CD4-positive, alpha-beta T cell (primary cell): ENCODE measurements at regions of chr2 and their contacts with region 1.

Region 1: DNA sequence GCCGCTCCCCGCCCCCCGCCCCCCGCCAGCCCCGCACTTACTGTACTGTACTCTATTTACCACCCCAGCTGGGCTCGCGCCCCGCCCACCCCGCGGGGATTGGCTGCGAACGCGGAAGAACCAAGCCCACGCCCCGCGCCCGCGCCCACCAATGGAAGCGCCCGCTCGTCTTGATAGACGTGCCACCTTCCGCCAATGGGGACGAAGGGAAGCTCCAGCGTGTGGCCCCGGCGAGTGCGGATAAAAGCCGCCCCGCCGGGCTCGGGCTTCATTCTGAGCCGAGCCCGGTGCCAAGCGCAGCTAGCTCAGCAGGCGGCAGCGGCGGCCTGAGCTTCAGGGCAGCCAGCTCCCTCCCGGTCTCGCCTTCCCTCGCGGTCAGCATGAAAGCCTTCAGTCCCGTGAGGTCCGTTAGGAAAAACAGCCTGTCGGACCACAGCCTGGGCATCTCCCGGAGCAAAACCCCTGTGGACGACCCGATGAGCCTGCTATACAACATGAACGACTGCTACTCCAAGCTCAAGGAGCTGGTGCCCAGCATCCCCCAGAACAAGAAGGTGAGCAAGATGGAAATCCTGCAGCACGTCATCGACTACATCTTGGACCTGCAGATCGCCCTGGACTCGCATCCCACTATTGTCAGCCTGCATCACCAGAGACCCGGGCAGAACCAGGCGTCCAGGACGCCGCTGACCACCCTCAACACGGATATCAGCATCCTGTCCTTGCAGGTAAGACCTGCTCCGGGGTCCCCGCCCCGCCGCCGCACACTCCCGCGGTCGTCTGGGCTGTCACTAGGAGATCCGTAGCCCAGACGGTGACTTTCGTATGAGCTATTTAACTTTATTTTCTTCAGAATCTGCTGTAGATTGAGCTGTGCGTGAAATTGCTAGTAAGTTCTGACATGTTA is at the start of gene ID2:
- DNase-seq: peak; percentile 97 to 99 (median 98)
- ATAC-seq: peak; percentile 73
- H3K4me3 ChIP-seq: peak within 1 kb of the TSS; percentile 77
- H3K4me3 Mint-ChIP-seq: peak within 1 kb of the TSS; percentile 99
- H3K27ac ChIP-seq: peak within 1 kb of the TSS; percentile 37 to 52
- H3K27ac Mint-ChIP-seq: peak within 1 kb of the TSS; percentile 89
- H3K4me1 ChIP-seq: peaks cover 46% of the 10 kb centered on the region
- H3K4me1 Mint-ChIP-seq: peaks cover 54% of the 10 kb centered on the region
- H3K27me3 ChIP-seq: peaks cover 12 to 23% of the 10 kb centered on the region in 2 experiments
- H3K27me3 Mint-ChIP-seq: peaks cover 20% of the 10 kb centered on the region
- CTCF ChIP-seq: no peak
- total RNA-seq, gene ID2: 238 to 242 TPM

Region 2: DNA sequence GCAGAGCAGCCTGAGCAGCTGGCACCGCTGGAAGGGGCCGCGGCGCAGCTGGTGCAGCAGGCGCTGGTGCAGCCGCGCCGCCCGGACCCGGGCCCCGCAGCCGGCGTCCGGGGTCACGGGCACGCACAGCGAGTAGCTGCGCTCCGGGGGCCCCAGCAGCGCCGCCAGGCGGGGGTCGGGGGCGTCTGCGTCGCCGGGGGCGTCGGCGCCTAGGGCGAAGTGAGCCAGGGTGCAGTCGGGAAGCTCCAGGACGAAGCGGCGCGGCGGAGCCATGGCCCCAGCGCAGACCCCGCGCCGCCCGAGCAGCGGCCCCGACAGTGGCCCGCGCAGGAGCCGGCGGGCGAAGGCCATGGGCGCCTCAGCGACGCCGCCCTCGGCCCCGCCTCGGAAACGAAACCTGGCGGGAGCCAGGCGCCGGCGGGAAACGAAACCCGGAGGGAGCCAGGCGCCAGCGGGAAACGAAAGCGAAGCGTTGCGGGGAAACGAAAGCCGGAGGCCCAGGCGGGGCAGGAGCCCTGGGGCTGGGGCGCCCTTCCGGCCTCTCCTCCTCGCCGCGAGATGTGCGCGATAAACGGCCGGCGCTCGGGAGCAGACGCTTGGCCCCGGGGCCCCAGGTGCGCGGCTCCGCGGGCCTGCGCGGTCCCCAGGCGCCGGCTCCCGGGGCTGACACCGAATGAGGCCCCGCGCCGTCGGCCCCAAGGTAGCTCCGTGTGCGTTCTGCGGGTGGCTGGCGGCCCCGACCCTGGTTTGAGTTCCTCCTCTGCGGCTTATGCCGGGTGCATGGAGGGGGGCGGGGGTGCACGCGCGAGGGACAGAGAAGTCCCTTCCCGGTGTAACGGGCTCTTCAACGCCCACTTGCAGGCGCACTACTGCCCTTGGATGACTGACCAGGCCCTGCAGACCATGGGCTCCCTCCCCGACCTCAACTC is 1816.4 kb before region 1 on chr2 and contains the start of gene CMPK2:
- CTCF ChIA-PET with region 1: no interaction called
- POLR2A ChIA-PET with region 1: interaction called, 10 read pairs
- intact Hi-C with region 1: no loop called
- DNase-seq: peak; percentile 60 to 97 (median 74)
- ATAC-seq: peak; percentile 74
- H3K4me3 ChIP-seq: peak within 1 kb of the TSS; percentile 93
- H3K4me3 Mint-ChIP-seq: peak within 1 kb of the TSS; percentile 96
- H3K27ac ChIP-seq: peak within 1 kb of the TSS in 1 of 2 donors; percentile 46
- H3K27ac Mint-ChIP-seq: peak within 1 kb of the TSS; percentile 86
- H3K4me1 ChIP-seq: peaks cover 19% of the 10 kb centered on the region
- H3K4me1 Mint-ChIP-seq: peaks cover 20% of the 10 kb centered on the region
- H3K27me3 ChIP-seq: no peaks in the 10 kb centered on the region
- H3K27me3 Mint-ChIP-seq: no peaks in the 10 kb centered on the region
- CTCF ChIP-seq: no peak
- total RNA-seq, gene CMPK2: 6.5 to 7.6 TPM

Region 3: GRCh38 chr2:7057865-7058400 is 1624.1 kb before region 1 on chr2:
- CTCF ChIA-PET with region 1: no interaction called
- POLR2A ChIA-PET with region 1: interaction called, 13 read pairs
- intact Hi-C with region 1: no loop called
- DNase-seq: peak in 4 of 14 experiments; percentile 36 to 62 (median 40)
- ATAC-seq: peak; percentile 37
- H3K4me3 ChIP-seq: peak overlapping the region; percentile 12
- H3K4me3 Mint-ChIP-seq: peak overlapping the region; percentile 72
- H3K27ac ChIP-seq: peak overlapping the region in 1 of 2 donors; percentile 57
- H3K27ac Mint-ChIP-seq: no peak overlapping the region
- H3K4me1 ChIP-seq: peaks cover 27% of the 10 kb centered on the region
- H3K4me1 Mint-ChIP-seq: no peaks in the 10 kb centered on the region
- H3K27me3 ChIP-seq: no peaks in the 10 kb centered on the region
- H3K27me3 Mint-ChIP-seq: no peaks in the 10 kb centered on the region
- CTCF ChIP-seq: no peak

Region 4: DNA sequence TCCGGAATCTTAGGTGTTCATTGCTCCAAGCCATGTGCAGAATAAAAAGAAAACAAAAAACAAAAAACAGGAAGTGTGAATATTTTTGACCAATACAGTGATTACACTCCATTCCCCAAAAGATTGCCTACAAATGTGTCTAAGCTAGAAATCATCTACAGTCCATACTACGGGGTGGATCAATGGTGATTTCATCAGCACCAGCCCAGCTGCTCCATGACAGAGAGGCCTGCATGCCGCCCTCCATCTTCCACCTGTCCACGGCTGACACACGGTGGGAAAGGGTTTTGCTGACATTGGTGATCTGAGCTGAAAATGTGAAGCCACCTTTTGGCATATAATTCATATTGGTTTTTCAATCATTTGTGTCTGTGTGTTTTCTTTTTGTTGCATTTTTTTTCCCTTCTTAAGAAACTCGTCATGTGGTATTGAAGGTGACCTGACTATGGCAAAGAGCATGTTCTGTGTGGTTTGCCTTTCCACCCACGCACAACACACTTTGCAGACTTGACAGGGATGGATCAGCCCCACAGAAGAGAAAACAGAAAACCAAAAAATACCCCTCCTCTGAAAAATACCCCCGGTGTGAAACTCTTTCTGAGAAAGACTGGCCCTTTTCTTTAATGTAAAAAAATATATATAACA is 1231.7 kb before region 1 on chr2:
- CTCF ChIA-PET with region 1: no interaction called
- POLR2A ChIA-PET with region 1: interaction called, 28 read pairs
- intact Hi-C with region 1: no loop called
- DNase-seq: peak in 7 of 14 experiments; percentile 23 to 76 (median 54)
- ATAC-seq: peak; percentile 81
- H3K4me3 ChIP-seq: no peak overlapping the region
- H3K4me3 Mint-ChIP-seq: peak overlapping the region; percentile 81
- H3K27ac ChIP-seq: peak overlapping the region; percentile 44 to 68
- H3K27ac Mint-ChIP-seq: peak overlapping the region; percentile 89
- H3K4me1 ChIP-seq: peaks cover 54% of the 10 kb centered on the region
- H3K4me1 Mint-ChIP-seq: peaks cover 73% of the 10 kb centered on the region
- H3K27me3 ChIP-seq: no peaks in the 10 kb centered on the region
- H3K27me3 Mint-ChIP-seq: no peaks in the 10 kb centered on the region
- CTCF ChIP-seq: no peak

Region 5: DNA sequence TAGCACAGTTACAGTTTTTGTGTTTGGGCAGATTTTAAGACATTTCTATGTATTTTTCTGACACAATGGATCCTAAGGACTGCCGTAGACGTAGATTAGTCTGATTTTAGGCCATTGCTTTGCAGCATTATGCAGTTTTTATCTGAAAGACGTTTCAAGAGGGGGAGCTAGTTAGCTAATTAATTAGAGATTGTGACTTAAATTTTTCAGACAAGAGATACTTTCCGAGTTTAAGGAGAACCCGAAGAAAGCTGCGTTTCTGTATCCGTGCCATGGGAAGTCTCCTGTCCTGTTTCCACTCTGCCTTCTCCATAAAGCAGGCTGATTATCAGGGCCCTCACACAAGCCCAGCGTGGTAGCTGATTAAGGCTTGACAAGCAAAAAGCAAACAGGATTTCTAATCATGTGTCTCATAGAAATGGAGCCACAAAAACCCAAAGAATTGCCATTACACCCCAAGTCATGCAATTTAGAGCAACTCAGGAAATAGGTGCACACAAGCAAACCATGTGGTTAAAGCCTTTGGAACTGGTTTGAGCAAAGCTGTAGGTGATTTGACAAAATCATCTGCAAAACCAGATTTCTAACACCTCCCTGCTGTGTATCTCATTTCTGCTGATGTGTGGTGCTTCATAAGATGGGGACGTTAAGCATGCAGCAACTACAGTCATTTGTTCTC is 956.7 kb before region 1 on chr2:
- CTCF ChIA-PET with region 1: no interaction called
- POLR2A ChIA-PET with region 1: interaction called, 34 read pairs
- intact Hi-C with region 1: loop called in 1 of 2 experiments (anchors 10 kb)
- DNase-seq: peak in 4 of 14 experiments; percentile 17 to 85 (median 72)
- ATAC-seq: peak; percentile 73
- H3K4me3 ChIP-seq: peak overlapping the region; percentile 52
- H3K4me3 Mint-ChIP-seq: peak overlapping the region; percentile 8
- H3K27ac ChIP-seq: peak overlapping the region in 1 of 2 donors; percentile 39
- H3K27ac Mint-ChIP-seq: peak overlapping the region; percentile 52
- H3K4me1 ChIP-seq: peaks cover 18% of the 10 kb centered on the region
- H3K4me1 Mint-ChIP-seq: peaks cover 33% of the 10 kb centered on the region
- H3K27me3 ChIP-seq: no peaks in the 10 kb centered on the region
- H3K27me3 Mint-ChIP-seq: no peaks in the 10 kb centered on the region
- CTCF ChIP-seq: no peak

Region 6: GRCh38 chr2:7994397-7994951 is 687.6 kb before region 1 on chr2:
- CTCF ChIA-PET with region 1: no interaction called
- POLR2A ChIA-PET with region 1: no interaction called
- intact Hi-C with region 1: no loop called
- DNase-seq: no peak
- ATAC-seq: no peak
- H3K4me3 ChIP-seq: no peak overlapping the region
- H3K4me3 Mint-ChIP-seq: no peak overlapping the region
- H3K27ac ChIP-seq: no peak overlapping the region
- H3K27ac Mint-ChIP-seq: no peak overlapping the region
- H3K4me1 ChIP-seq: no peaks in the 10 kb centered on the region
- H3K4me1 Mint-ChIP-seq: peaks cover 10% of the 10 kb centered on the region
- H3K27me3 ChIP-seq: no peaks in the 10 kb centered on the region
- H3K27me3 Mint-ChIP-seq: no peaks in the 10 kb centered on the region
- CTCF ChIP-seq: no peak

Region 7: DNA sequence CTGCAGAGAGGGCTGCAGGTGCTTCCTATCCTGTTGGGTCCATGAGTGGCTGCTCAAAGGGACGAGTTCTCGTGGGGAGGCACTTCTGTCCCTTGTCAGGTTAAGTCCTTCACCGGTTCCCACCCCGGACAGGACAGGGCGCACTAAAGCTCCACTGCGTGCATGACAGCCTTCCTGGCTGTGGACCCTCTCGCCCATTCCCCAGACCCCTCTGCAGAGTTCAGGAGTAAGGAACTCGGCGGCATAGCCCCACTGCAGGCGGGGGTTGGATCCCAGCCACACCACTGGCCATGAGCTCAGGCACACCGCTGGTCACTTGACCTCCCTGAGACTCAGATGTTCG is 147.7 kb before region 1 on chr2:
- CTCF ChIA-PET with region 1: no interaction called
- POLR2A ChIA-PET with region 1: no interaction called
- intact Hi-C with region 1: no loop called
- DNase-seq: no peak
- ATAC-seq: no peak
- H3K4me3 ChIP-seq: no peak overlapping the region
- H3K4me3 Mint-ChIP-seq: no peak overlapping the region
- H3K27ac ChIP-seq: no peak overlapping the region
- H3K27ac Mint-ChIP-seq: no peak overlapping the region
- H3K4me1 ChIP-seq: peaks cover 20% of the 10 kb centered on the region
- H3K4me1 Mint-ChIP-seq: no peaks in the 10 kb centered on the region
- H3K27me3 ChIP-seq: no peaks in the 10 kb centered on the region
- H3K27me3 Mint-ChIP-seq: no peaks in the 10 kb centered on the region
- CTCF ChIP-seq: no peak

Region 8: DNA sequence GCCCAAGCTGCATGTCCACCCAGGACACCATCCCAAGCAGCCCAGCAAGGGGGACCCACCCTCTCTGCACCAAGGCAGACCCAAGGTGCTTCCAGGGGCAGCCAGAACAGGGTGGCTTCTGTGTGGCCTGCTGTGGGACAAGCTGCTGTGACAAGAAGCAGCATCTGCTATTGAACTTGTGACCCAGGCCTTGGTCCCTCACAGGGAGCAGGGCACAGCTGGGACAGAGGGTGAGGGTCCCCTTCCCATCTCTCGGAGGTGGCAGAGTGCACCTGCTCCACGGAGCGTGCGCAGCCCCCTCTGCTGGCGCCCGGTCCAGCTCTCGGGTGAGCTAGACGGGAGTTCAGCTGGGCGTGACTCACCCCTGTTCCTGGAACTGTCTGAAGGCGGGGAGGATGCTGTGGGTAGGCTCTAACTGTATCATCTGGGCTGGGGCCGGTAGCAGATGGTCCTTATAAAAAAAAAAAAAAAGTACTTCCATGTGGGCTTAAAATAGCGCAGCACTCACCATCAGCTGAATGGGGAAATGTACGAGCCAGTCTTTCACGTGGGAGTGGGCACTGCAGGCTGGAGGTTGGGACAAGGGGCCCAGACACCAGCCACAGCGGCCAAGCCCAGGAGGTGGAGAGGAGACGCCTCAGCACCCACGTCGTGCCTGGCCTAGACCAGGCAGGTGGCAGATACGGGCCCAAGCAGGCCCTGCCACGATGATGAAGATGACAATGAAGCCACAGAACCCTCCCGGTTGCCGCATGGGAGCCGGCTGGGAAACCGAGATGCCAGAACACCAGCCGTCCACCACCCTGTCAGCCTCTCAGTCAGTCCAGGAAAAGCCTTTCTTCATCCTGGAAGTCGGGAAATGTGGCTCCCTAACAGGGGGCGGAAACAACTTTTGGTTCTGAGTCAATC is 137.0 kb before region 1 on chr2:
- CTCF ChIA-PET with region 1: interaction called, 4 read pairs
- POLR2A ChIA-PET with region 1: interaction called, 25 read pairs
- intact Hi-C with region 1: loop called in 1 of 2 experiments (anchors 5 kb)
- DNase-seq: peak; percentile 40 to 92 (median 72)
- ATAC-seq: peak; percentile 87
- H3K4me3 ChIP-seq: no peak overlapping the region
- H3K4me3 Mint-ChIP-seq: peak overlapping the region; percentile 35
- H3K27ac ChIP-seq: peak overlapping the region in 1 of 2 donors; percentile 59
- H3K27ac Mint-ChIP-seq: peak overlapping the region; percentile 66
- H3K4me1 ChIP-seq: peaks cover 71% of the 10 kb centered on the region
- H3K4me1 Mint-ChIP-seq: peaks cover 48% of the 10 kb centered on the region
- H3K27me3 ChIP-seq: no peaks in the 10 kb centered on the region
- H3K27me3 Mint-ChIP-seq: no peaks in the 10 kb centered on the region
- CTCF ChIP-seq: peak; percentile 41

Region 9: DNA sequence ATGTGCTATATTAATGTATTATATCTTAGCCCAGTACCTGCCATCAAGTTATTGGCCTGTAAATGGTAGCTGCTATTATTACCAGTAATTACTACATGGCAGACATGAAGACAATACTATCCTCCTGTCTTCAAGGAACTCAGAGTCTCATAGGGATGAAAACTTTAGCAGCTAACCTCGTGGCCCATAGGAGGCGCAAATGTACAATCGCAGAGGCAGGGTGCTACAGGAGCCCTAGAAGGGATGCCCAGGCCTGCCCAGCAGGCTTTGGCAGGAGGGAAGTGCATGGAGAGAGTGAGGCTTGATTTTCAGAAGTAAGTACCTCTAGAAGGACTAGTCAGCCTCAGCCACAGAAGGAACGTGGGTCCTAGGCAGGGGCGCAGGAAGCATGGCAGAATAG is 200.1 kb after region 1 on chr2:
- CTCF ChIA-PET with region 1: no interaction called
- POLR2A ChIA-PET with region 1: no interaction called
- intact Hi-C with region 1: no loop called
- DNase-seq: no peak
- ATAC-seq: no peak
- H3K4me3 ChIP-seq: no peak overlapping the region
- H3K4me3 Mint-ChIP-seq: no peak overlapping the region
- H3K27ac ChIP-seq: no peak overlapping the region
- H3K27ac Mint-ChIP-seq: no peak overlapping the region
- H3K4me1 ChIP-seq: no peaks in the 10 kb centered on the region
- H3K4me1 Mint-ChIP-seq: no peaks in the 10 kb centered on the region
- H3K27me3 ChIP-seq: no peaks in the 10 kb centered on the region
- H3K27me3 Mint-ChIP-seq: no peaks in the 10 kb centered on the region
- CTCF ChIP-seq: no peak

Region 10: GRCh38 chr2:8986327-8986976 is 304.4 kb after region 1 on chr2:
- CTCF ChIA-PET with region 1: no interaction called
- POLR2A ChIA-PET with region 1: no interaction called
- intact Hi-C with region 1: no loop called
- DNase-seq: no peak
- ATAC-seq: no peak
- H3K4me3 ChIP-seq: no peak overlapping the region
- H3K4me3 Mint-ChIP-seq: no peak overlapping the region
- H3K27ac ChIP-seq: no peak overlapping the region
- H3K27ac Mint-ChIP-seq: no peak overlapping the region
- H3K4me1 ChIP-seq: no peaks in the 10 kb centered on the region
- H3K4me1 Mint-ChIP-seq: no peaks in the 10 kb centered on the region
- H3K27me3 ChIP-seq: no peaks in the 10 kb centered on the region
- H3K27me3 Mint-ChIP-seq: no peaks in the 10 kb centered on the region
- CTCF ChIP-seq: no peak